Activated CD4-positive, alpha-beta T cell treated with anti-CD3 and anti-CD28 coated beads, Interleukin-2, amount 10 ng/mL, durations not matched to agents 24 days and 14 days (primary cell): ENCODE measurements at regions of chr2 and their contacts with region 1.

Region 1: GRCh38 chr2:61764035-61764800 is 89.6 kb downstream of the FAM161A start:
- DNase-seq: peak; percentile 99
- H3K4me3 Mint-ChIP-seq: peak overlapping the region; percentile 95
- H3K27ac Mint-ChIP-seq: peak overlapping the region; percentile 97
- H3K4me1 Mint-ChIP-seq: peaks cover 12% of the 10 kb centered on the region
- H3K27me3 Mint-ChIP-seq: peaks cover 1% of the 10 kb centered on the region

Region 2: DNA sequence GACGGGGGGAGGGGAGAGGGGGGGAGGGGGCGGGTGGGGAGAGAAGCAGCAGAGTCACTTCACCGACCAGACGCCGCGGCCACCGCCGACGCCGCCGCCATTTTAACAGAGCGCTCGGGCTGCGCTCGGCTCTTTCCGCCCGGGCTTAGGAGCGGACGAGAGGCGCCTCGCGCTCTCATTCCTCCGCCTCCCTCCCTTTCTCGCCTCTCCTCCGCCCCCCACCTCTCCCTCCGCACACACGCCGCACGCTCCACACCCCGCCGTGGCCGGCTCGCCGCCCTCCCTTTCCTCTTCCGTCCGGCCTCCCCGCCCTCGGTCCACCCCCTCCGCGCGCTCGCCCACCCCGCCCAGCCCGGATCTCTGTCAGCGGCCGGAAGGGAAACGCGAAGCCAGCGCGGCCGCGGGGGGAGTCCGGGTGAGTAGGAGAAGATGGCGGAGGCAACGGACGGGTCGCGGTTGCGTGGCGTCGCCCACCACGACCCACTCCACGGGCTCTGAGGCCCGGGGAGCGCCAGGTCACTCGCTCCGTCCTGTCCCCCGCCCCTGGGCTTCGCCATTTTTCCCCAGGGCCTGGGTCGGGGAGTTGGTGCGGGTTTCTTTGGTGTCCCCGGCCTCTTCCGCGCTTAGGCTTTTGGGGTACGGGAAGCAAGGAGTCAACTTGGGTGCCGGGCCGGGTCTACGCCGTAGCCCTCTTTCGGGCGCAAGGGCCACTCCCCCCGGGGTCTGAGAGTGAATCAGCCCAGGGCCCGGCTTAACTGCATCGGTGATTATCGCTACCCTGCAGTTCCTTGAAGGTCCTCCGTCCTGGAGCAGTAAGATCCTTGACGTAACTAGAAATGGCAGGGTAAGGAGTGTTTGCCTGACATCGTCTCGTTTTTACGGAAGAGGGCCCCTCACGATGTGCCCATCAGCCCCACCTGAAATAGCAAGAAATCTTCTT is 293.0 kb before region 1 on chr2 and contains the start of gene USP34:
- intact Hi-C with region 1: loop called (anchors 1 kb)
- DNase-seq: peak; percentile 96
- H3K4me3 Mint-ChIP-seq: peak within 1 kb of the TSS; percentile 98
- H3K27ac Mint-ChIP-seq: peak within 1 kb of the TSS; percentile 98
- H3K4me1 Mint-ChIP-seq: peaks cover 19% of the 10 kb centered on the region
- H3K27me3 Mint-ChIP-seq: no peaks in the 10 kb centered on the region
- total RNA-seq, gene USP34: 84.3 and 93.8 TPM in 2 replicates

Region 3: DNA sequence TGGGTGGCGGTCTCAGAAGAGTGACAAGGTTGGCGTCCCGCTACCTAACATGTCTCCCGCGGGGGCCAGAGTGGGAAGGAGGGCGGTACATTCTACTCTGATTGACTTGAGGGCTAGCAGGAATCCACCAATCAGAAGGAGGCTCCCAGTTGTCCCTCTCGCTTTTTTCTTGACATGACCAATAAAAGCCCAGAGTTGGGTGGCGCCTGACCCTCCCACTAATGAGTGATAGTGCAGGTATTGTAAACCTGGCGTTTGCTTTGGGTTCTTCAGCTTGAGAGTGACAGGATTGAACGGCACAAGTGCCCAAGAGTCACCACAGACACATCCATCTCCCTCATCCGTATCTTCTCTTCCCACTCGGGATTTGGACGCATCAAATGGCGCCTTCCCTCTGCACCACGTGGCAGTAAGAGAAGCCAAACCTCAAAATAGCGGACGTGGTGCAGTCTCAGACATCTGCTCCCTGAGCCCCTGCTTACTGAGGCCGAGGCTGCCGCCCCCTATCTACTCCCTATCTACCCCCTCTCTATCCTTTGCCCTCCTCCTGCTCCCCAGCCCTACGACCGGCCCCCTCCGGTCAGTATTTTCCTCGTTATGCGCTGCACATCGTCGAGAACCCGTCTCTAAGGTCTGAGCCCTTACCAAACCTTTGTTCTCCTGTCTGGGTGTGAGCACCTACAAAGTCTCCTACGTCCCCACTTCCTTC is 90.4 kb after region 1 on chr2:
- intact Hi-C with region 1: loop called (anchors 1 kb)
- DNase-seq: peak; percentile 96
- H3K4me3 Mint-ChIP-seq: peak overlapping the region; percentile 96
- H3K27ac Mint-ChIP-seq: peak overlapping the region; percentile 88
- H3K4me1 Mint-ChIP-seq: peaks cover 16% of the 10 kb centered on the region
- H3K27me3 Mint-ChIP-seq: no peaks in the 10 kb centered on the region

Region 4: GRCh38 chr2:62195421-62196277 is 431.4 kb after region 1 on chr2 and contains the start of gene B3GNT2:
- intact Hi-C with region 1: loop called (anchors 10 kb)
- DNase-seq: peak; percentile 94
- H3K4me3 Mint-ChIP-seq: peak within 1 kb of the TSS; percentile 89
- H3K27ac Mint-ChIP-seq: peak within 1 kb of the TSS; percentile 92
- H3K4me1 Mint-ChIP-seq: peaks cover 34% of the 10 kb centered on the region
- H3K27me3 Mint-ChIP-seq: peaks cover 5% of the 10 kb centered on the region
- total RNA-seq, gene B3GNT2: 30.4 and 30.9 TPM in 2 replicates